ENCODE measurements at regions of chr5 and their contacts with region 1.

Region 1: DNA sequence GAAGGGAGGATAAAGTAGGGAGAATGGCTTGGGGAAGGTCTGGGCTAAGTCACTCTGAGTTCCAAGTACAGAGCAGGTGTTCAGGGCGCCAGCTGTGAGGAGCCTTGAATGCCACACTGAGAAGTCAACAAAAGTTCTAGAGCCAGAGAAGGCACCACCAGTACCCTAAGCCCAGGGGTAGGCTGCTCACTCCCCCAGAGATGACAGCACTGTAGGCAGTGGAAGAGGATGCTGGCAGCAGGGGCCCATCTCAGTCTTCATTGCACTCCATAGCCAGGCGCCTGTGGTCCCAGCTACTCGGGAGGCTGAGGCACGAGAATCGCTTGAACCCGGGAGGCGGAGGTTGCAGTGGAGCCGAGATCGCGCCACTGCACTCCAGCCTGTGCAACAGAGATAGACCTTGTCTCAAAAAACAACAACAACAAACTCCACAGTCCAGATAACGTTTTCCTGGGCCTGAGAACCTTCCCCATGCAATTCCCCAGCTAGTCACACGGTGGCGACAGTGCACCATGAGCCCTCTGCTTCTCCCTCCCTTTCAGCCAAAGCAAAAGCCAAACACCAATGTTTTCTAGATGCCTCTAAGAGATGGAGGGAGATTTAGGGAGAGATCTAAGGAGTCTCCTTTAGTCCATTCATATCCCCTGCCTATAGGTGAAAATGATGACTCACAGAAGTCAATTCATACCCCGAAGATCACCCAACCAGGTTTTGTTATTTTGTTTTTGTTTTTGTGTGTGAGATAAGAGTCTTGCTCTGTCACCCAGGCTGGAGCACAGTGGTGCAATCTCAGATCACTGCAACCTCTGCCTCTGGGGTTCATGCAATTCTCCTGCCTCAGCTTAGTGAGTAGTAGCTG is 19.8 kb upstream of the NSD1 start:
- DNase-seq: peak; percentile 73
- ATAC-seq: peak; percentile 62
- H3K4me3 Mint-ChIP-seq: no peak overlapping the region
- H3K27ac Mint-ChIP-seq: no peak overlapping the region
- H3K4me1 Mint-ChIP-seq: peaks cover 20% of the 10 kb centered on the region
- H3K27me3 Mint-ChIP-seq: no peaks in the 10 kb centered on the region
- CTCF ChIP-seq: no peak

Region 2: DNA sequence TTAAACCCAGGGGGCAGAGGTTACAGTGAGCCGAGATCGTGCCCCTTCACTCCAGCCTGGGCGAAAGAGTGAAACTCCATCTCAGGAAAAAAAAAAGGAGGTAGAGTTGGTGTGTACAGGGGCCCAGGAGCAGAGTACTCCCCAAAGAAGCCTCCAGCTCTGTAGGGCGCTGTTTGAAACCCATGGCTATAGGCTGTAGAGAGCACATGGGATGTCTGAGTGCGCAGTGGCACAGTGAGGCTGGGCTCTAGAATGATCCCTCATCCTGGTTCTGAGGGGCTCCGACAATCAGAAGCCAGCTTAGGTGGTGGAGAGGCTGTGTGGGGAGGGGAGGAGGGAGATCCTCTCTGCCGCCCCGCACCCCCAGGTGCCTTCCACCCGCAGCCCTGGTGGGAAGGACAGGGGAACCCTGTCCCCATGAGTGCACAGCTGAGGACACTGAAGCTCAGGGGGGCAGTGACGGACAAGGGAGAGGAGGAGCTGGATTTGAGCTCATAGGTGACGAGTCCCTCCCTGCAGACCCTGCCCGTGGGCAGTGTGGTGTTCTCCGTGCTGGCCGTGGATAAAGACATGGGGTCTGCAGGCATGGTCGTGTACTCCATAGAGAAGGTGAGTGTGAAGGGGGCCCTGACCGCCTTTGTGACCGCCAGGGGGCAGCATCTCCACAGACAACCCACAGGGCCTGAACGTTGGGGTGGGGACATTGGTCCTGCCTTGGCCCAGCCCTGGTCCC is 540.1 kb before region 1 on chr5:
- CTCF ChIA-PET with region 1: no interaction called
- POLR2A ChIA-PET with region 1: no interaction called
- intact Hi-C with region 1: loop called (anchors 1 kb)
- DNase-seq: peak; percentile 75
- ATAC-seq: peak; percentile 86
- H3K4me3 Mint-ChIP-seq: no peak overlapping the region
- H3K27ac Mint-ChIP-seq: no peak overlapping the region
- H3K4me1 Mint-ChIP-seq: peaks cover 13% of the 10 kb centered on the region
- H3K27me3 Mint-ChIP-seq: peaks cover 8% of the 10 kb centered on the region
- CTCF ChIP-seq: peak; percentile 34

Region 3: DNA sequence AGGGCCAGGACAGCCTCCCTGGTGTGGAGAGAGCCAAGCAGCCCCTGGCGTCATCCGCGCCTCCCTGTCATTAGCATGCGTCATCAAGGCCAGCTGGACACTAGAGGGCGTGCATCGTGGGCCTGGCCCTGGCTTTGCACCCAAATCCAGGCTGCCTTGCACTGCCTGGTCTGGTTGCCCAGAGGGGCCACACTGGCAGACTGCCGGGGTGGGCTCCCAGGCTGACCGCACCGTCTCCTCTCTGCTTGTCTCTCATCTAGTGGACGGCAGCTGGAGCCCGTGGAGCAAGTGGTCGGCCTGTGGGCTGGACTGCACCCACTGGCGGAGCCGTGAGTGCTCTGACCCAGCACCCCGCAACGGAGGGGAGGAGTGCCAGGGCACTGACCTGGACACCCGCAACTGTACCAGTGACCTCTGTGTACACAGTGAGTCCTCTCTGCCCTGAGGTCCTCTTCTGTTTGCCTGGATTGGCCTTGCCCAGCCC is 243.6 kb before region 1 on chr5:
- CTCF ChIA-PET with region 1: no interaction called
- POLR2A ChIA-PET with region 1: no interaction called
- intact Hi-C with region 1: no loop called
- DNase-seq: no peak
- ATAC-seq: no peak
- H3K4me3 Mint-ChIP-seq: no peak overlapping the region
- H3K27ac Mint-ChIP-seq: no peak overlapping the region
- H3K4me1 Mint-ChIP-seq: peaks cover 6% of the 10 kb centered on the region
- H3K27me3 Mint-ChIP-seq: peaks cover 17% of the 10 kb centered on the region
- CTCF ChIP-seq: no peak

Region 4: GRCh38 chr5:177071666-177072385 is 42.0 kb before region 1 on chr5:
- CTCF ChIA-PET with region 1: interaction called, 66 read pairs
- POLR2A ChIA-PET with region 1: interaction called, 8 read pairs
- intact Hi-C with region 1: loop called (anchors 1 kb)
- DNase-seq: peak; percentile 55
- ATAC-seq: peak; percentile 89
- H3K4me3 Mint-ChIP-seq: peak overlapping the region; percentile 61
- H3K27ac Mint-ChIP-seq: peak overlapping the region; percentile 82
- H3K4me1 Mint-ChIP-seq: peaks cover 35% of the 10 kb centered on the region
- H3K27me3 Mint-ChIP-seq: no peaks in the 10 kb centered on the region
- CTCF ChIP-seq: peak; percentile 85

Region 5: GRCh38 chr5:177176175-177176711 is 62.4 kb after region 1 on chr5:
- CTCF ChIA-PET with region 1: interaction called, 3 read pairs
- POLR2A ChIA-PET with region 1: no interaction called
- intact Hi-C with region 1: loop called (anchors 5 kb)
- DNase-seq: no peak
- ATAC-seq: no peak
- H3K4me3 Mint-ChIP-seq: peak overlapping the region; percentile 15
- H3K27ac Mint-ChIP-seq: peak overlapping the region; percentile 12
- H3K4me1 Mint-ChIP-seq: peaks cover 55% of the 10 kb centered on the region
- H3K27me3 Mint-ChIP-seq: no peaks in the 10 kb centered on the region
- CTCF ChIP-seq: no peak

Region 6: GRCh38 chr5:177256296-177256695 is 142.5 kb after region 1 on chr5:
- CTCF ChIA-PET with region 1: no interaction called
- POLR2A ChIA-PET with region 1: no interaction called
- intact Hi-C with region 1: loop called (anchors 5 kb)
- DNase-seq: no peak
- ATAC-seq: no peak
- H3K4me3 Mint-ChIP-seq: no peak overlapping the region
- H3K27ac Mint-ChIP-seq: no peak overlapping the region
- H3K4me1 Mint-ChIP-seq: no peaks in the 10 kb centered on the region
- H3K27me3 Mint-ChIP-seq: no peaks in the 10 kb centered on the region
- CTCF ChIP-seq: no peak

Region 7: DNA sequence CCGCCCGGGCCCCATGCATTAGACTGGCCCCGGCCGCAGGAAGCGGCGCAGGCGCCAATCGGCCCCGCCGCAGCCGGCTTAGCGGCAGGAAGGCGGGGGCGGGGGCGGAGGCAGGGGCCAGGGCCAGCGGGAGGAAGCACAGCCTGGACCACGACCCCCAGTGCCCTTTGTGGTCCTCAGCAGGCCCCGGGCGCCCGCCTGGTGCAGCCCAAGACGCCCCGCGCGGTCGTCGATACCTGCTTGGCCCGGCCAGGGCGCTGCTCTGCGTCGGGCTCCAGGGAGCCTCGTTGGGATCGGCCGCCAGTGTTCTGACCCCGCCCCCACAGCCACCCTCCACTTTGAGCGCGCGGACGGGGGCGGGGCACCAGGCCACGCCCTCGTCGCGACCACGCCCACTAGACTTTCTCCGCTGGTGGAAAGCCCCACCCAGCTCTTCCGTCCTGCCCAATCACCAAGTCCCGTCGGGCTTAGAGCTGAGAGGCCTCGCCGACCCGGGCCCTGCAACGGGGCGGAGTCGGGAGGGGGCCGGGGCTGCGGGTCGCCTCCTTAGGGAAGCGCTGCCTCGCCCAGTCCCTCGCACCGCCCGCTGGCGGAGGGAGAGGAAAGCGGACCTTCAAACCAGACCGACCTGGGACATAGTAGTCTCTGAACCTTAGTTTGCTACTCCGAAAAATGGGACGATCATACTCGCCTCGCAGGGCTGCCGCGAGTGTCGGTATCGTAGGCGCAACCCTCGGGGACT is 383.7 kb after region 1 on chr5 and contains the start of gene PDLIM7:
- CTCF ChIA-PET with region 1: no interaction called
- POLR2A ChIA-PET with region 1: no interaction called
- intact Hi-C with region 1: loop called (anchors 10 kb)
- DNase-seq: peak; percentile 97
- ATAC-seq: peak; percentile 83
- H3K4me3 Mint-ChIP-seq: peak within 1 kb of the TSS; percentile 80
- H3K27ac Mint-ChIP-seq: peak within 1 kb of the TSS; percentile 39
- H3K4me1 Mint-ChIP-seq: peaks cover 79% of the 10 kb centered on the region
- H3K27me3 Mint-ChIP-seq: peaks cover 2% of the 10 kb centered on the region
- CTCF ChIP-seq: no peak
- total RNA-seq, gene PDLIM7: 17.0 and 17.7 TPM in 2 replicates

Measured in activated B cell treated with CpG ODN at 0.5 μM for 24 hours (primary cell).